ENCODE measurements at regions of chr19 and their contacts with region 1.

Region 1: DNA sequence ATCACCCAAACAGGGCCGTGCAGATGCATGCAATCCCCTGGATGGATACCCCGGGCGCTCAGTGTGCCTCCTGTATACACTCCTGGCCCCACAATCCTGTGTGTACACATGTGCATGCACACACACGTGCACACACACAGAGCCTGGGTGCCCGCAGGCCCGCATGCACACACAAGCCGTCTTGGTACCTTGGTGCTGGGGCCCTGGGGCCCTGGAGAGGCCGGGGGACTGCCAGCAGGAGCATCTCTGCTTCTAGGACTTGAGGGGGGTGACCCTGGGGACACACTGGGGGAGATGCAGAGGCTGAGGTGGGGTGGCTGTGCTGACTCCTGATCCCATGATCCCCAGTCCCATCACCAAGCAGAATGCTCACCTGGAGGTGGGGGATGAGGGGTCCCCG is 15.6 kb upstream of the EPOR start:
- DNase-seq: no peak
- H3K4me3 ChIP-seq: no peak overlapping the region
- H3K27ac ChIP-seq: no peak overlapping the region
- H3K4me1 ChIP-seq: no peaks in the 10 kb centered on the region
- H3K27me3 ChIP-seq: no peaks in the 10 kb centered on the region
- CTCF ChIP-seq: no peak
- EP300 ChIP-seq: no peak
- POLR2A ChIP-seq: no peak

Region 2: GRCh38 chr19:11041966-11042627 is 357.6 kb before region 1 on chr19:
- in situ Hi-C with region 1: no loop called
- intact Hi-C with region 1: loop called (anchors 10 kb)
- DNase-seq: no peak
- H3K4me3 ChIP-seq: no peak overlapping the region
- H3K27ac ChIP-seq: no peak overlapping the region
- H3K4me1 ChIP-seq: no peaks in the 10 kb centered on the region
- H3K27me3 ChIP-seq: no peaks in the 10 kb centered on the region
- CTCF ChIP-seq: no peak
- EP300 ChIP-seq: no peak
- POLR2A ChIP-seq: no peak

Region 3: DNA sequence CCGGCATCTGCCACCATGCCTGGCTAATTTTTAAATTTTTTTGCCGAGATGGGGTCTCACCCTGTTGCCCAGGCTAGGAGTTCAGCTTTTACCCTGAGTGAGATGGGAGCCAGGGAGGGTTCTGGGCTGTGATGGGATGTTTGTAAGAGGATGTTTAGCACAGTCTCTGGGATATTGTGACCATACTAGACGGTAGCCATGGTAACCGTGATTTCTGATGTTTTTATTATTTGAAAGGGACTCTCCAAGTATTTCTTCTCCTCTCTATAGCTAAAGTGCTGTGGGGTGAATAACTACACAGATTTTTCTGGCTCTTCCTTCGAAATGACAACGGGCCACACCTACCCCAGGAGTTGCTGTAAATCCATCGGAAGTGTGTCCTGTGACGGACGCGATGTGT is 93.3 kb before region 1 on chr19:
- in situ Hi-C with region 1: no loop called
- intact Hi-C with region 1: no loop called
- DNase-seq: no peak
- H3K4me3 ChIP-seq: no peak overlapping the region
- H3K27ac ChIP-seq: no peak overlapping the region
- H3K4me1 ChIP-seq: no peaks in the 10 kb centered on the region
- H3K27me3 ChIP-seq: no peaks in the 10 kb centered on the region
- CTCF ChIP-seq: no peak
- EP300 ChIP-seq: no peak
- POLR2A ChIP-seq: no peak

Region 4: DNA sequence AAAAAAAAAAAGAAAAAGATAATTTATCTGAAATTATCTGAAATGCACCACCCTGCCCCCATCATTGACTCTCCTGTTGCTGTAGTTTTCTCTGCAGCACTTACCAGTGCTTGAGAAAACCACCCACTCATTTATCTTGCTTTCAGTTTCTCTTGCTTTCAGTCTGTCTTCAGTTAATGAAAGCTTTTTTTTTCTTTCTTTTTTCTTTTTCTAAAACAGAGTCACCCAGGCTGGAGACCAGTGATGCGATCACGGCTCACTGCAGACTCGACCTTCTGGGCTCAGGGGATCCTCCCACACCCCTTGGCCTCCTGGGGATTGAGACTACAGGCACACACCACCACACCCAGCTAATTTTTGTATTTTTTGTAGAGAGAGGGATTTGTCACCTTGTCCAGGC is 182.1 kb after region 1 on chr19:
- in situ Hi-C with region 1: no loop called
- intact Hi-C with region 1: no loop called
- DNase-seq: peak; percentile 25
- H3K4me3 ChIP-seq: no peak overlapping the region
- H3K27ac ChIP-seq: peak overlapping the region; percentile 51 to 62 (median 56)
- H3K4me1 ChIP-seq: peaks cover 0 to 26% (median 13%) of the 10 kb centered on the region in 4 donors
- H3K27me3 ChIP-seq: peaks cover 10% of the 10 kb centered on the region
- CTCF ChIP-seq: no peak
- EP300 ChIP-seq: no peak
- POLR2A ChIP-seq: no peak

Measured in transverse colon (tissue), 4 donors.